ENCODE measurements at regions of chr7 and their contacts with region 1.

Region 1: DNA sequence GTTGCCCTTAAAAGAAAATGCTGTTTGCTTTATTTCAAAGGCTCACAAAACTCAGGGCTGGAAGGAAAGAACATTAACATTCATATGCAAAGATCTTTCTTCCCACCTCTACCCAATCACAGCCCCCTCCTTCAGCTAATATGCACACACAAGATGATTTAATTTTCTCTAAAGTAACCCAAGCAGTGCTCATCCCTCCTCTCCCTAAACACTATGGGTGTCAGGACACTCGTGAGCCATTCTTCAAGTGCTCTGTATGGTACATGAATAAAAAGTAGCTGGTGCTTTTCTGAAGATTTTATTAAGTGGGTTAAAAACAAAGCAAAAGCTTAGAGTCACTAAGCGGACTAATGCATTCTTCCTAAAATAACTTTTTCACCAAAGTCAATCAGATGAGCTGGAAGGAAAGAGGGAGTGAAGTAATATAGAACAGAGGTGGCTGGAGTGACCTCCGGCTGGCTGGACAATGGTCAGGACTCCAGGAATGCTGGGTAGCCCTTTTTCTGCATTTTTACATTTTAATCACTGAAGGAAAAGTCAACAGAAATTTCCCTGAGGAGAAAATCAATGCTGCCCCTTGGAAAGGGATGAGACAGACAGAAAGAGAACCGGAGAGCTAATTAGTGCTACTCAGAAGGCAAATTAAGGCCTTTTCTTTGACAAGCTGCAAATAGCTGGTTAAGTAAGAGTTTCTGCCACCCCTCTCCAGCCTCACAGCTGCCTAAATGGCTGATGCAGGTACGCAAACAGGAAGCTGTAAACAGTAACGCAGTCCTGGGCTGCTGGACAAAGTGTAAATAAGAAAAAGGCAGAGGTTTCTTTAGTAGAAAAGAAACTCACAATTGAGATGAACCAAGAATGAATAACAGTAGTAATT is 6.6 kb downstream of the DGKI start:
- DNase-seq: no peak
- CTCF ChIP-seq: no peak

Region 2: DNA sequence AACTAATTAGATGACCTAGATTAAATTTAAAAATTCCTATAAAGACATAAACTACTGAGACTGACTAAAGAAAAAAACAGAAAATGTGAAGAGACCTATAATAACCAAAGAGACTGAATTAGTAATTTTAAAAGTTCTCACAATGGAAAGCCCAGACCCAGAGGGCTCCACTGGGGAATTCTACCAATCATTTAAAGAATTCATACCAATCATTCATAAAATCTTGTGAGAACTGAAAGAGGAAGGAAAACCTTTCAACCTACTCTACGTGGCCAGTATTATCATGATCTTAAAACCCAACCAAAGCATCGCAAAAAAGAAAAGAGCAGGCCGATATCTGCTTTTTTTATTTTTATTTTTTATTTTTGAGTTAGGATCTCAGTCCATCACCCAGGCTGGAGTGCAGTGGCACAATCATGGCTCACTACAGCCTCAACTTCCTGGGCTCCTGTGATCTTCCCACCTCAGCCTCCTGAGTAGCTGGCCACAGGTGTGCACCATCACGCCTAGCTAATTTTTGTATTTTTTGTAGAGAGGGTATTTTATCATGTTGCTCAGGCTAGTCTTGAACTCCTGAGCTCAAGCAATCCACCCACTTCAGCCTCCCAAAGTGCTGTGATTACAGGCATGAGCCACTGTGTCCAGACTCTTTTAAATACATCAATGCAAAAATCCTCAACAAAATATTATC is 41.9 kb before region 1 on chr7:
- CTCF ChIA-PET with region 1: no interaction called
- POLR2A ChIA-PET with region 1: no interaction called
- DNase-seq: peak; percentile 36
- CTCF ChIP-seq: no peak

Region 3: DNA sequence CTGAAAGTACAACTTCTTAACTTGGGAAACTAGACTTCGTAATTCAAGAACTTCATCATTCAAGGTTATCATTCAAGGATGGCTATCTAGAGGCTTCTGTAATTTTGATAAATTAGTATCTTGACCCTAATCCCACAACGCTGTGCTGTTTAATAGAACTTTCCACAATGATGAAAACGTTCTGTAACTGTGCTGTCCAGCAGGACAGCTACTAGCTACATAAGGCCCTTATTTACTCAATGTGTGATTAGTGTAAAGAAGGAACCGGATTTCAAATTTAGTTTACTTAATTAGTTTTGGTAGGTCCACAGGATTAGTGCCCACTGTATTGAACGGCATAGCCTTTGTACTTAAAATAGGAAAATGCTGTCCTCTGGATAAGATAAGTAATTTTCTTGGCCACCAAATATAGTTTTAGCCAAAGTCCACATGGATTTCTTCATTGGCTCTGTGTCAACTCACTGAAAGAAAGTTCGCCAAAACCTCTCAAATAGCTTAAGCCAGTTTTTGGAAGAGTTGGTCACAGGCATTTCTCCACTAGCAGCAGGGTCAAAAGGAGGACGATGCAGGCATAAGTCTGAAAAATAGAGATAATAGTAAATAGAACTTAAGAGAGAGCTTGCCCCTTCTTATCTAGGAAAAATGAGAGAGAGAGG is 10.7 kb before region 1 on chr7:
- CTCF ChIA-PET with region 1: interaction called, 27 read pairs
- POLR2A ChIA-PET with region 1: no interaction called
- DNase-seq: no peak
- CTCF ChIP-seq: no peak

Measured in GM10248 (cell line).